Panc1 (cell line): ENCODE measurements at regions of chr12 and their contacts with region 1.

Region 1: DNA sequence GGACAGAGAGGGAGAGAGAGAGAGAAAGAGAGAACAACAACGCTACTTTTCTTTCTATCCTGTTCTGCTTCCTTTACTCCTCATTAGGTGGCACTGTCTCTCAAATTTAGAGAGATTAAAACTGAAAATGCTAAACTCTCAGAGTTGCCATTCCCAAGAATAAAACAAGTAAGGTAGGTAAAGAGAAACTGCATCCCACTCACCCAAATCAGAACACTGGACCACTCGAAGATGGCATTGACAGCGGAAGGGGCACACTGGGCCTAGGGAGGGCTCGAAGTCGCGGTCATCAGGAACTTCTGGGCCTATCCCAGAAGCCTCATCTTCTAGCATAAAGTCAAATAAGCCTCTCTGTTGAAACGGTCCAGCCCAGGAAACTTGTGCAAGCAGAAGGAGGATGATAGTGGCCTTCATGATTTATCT is 4.5 kb downstream of the DCN start:
- DNase-seq: peak; percentile 1
- ATAC-seq: no peak
- H3K4me3 ChIP-seq: peak overlapping the region in 1 of 2 experiments; percentile 16; a peak in 1 of 4 replicates
- H3K27ac ChIP-seq: no peak overlapping the region
- H3K4me1 ChIP-seq: no peaks in the 10 kb centered on the region
- H3K27me3 ChIP-seq: no peaks in the 10 kb centered on the region
- CTCF ChIP-seq: peak; percentile 34; the same call in 1 of the 2 replicates

Region 2: GRCh38 chr12:91163116-91163515 is 15.0 kb before region 1 on chr12:
- CTCF ChIA-PET with region 1: no interaction called
- POLR2A ChIA-PET with region 1: no interaction called
- in situ Hi-C with region 1: no loop called
- intact Hi-C with region 1: no loop called
- DNase-seq: no peak
- ATAC-seq: no peak
- H3K4me3 ChIP-seq: no peak overlapping the region
- H3K27ac ChIP-seq: no peak overlapping the region
- H3K4me1 ChIP-seq: no peaks in the 10 kb centered on the region
- H3K27me3 ChIP-seq: no peaks in the 10 kb centered on the region
- CTCF ChIP-seq: no peak

Region 3: DNA sequence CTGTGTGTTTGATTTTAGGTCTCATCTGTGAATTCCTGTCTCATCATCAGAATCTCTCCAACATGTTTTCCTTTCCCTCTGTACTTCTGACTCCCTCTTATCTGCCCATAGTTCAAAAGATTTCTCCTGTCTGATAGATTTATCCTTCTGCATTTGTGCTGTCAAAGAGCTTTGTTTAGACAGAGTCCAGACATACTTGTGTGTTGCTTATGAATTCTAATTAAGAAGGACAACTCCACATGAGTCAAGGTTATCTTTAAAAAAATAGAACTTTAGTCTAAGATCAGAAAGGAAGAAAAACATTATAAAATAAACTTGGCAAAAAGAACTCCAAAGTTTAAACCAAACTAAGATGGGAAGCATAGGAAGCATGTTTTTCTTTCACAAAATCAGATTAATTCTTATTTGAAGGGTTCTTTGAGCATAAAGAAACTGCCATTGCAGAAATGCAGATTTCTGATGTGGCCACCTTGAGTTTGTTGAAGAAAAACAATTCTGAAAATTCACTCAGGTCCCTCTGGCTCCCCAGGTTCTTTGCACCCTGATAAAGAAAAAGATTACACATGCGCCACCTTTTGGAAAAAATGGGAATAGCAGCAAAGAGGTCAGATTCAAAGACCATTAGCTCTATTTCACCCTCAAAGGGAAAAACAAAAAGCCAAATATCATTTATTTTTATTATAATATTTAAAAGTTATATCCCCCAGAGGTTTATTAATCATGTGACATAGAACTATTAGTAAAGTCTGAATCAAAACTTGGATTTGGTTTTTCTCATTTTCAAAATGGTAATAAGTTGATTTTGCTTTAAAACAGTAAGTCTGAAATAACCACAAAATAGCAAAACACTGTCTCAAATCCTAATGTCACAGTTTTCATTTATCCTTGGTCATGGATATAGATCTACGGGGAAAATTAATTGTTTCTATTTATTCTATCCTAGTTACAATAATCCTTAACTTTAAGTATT is 148.2 kb after region 1 on chr12:
- CTCF ChIA-PET with region 1: no interaction called
- POLR2A ChIA-PET with region 1: no interaction called
- in situ Hi-C with region 1: no loop called
- intact Hi-C with region 1: loop called (anchors 5 kb)
- DNase-seq: peak; percentile 20
- ATAC-seq: no peak
- H3K4me3 ChIP-seq: no peak overlapping the region
- H3K27ac ChIP-seq: no peak overlapping the region
- H3K4me1 ChIP-seq: no peaks in the 10 kb centered on the region
- H3K27me3 ChIP-seq: no peaks in the 10 kb centered on the region
- CTCF ChIP-seq: peak; percentile 77; the same call in 1 of the 2 replicates

Region 4: GRCh38 chr12:91432089-91432488 is 253.9 kb after region 1 on chr12:
- CTCF ChIA-PET with region 1: no interaction called
- POLR2A ChIA-PET with region 1: no interaction called
- in situ Hi-C with region 1: no loop called
- intact Hi-C with region 1: no loop called
- DNase-seq: no peak
- ATAC-seq: no peak
- H3K4me3 ChIP-seq: no peak overlapping the region
- H3K27ac ChIP-seq: no peak overlapping the region
- H3K4me1 ChIP-seq: no peaks in the 10 kb centered on the region
- H3K27me3 ChIP-seq: no peaks in the 10 kb centered on the region
- CTCF ChIP-seq: no peak

Region 5: GRCh38 chr12:92466391-92467305 is 1288.5 kb after region 1 on chr12:
- CTCF ChIA-PET with region 1: no interaction called
- POLR2A ChIA-PET with region 1: no interaction called
- in situ Hi-C with region 1: no loop called
- intact Hi-C with region 1: no loop called
- DNase-seq: no peak
- ATAC-seq: no peak
- H3K4me3 ChIP-seq: no peak overlapping the region
- H3K27ac ChIP-seq: no peak overlapping the region
- H3K4me1 ChIP-seq: no peaks in the 10 kb centered on the region
- H3K27me3 ChIP-seq: no peaks in the 10 kb centered on the region
- CTCF ChIP-seq: no peak